Heart right ventricle (tissue), 16 donors: ENCODE measurements at regions of chr9 and their contacts with region 1.

Region 1: GRCh38 chr9:108939975-108940374 is 5.8 kb downstream of the ABITRAM start:
- DNase-seq: no peak
- ATAC-seq: no peak
- H3K4me3 ChIP-seq: no peak overlapping the region
- H3K27ac ChIP-seq: no peak overlapping the region
- H3K4me1 ChIP-seq: peaks cover 2 to 12% (median 11%) of the 10 kb centered on the region in 9 donors
- H3K27me3 ChIP-seq: no peaks in the 10 kb centered on the region
- CTCF ChIP-seq: no peak

Region 2: DNA sequence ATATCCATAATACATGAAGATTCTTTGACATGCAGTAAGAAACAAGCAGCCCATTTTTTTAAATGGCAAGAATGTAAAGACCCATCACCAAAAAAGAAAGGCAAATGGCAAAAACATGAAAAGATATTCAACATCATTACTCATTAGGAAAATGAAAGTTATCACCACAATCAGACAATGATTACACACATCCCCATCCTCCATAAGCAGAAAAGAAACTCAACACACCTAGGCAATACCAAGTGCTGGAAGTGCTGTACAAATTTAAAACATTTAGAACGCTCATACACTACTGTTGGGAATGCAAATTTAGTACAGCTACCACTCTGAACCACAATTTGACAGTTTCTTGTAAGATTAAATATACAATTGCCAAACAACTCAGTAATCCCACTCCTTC is 550.9 kb before region 1 on chr9:
- intact Hi-C with region 1: no loop called
- DNase-seq: no peak
- ATAC-seq: no peak
- H3K4me3 ChIP-seq: no peak overlapping the region
- H3K27ac ChIP-seq: no peak overlapping the region
- H3K4me1 ChIP-seq: no peaks in the 10 kb centered on the region
- H3K27me3 ChIP-seq: no peaks in the 10 kb centered on the region
- CTCF ChIP-seq: no peak

Region 3: DNA sequence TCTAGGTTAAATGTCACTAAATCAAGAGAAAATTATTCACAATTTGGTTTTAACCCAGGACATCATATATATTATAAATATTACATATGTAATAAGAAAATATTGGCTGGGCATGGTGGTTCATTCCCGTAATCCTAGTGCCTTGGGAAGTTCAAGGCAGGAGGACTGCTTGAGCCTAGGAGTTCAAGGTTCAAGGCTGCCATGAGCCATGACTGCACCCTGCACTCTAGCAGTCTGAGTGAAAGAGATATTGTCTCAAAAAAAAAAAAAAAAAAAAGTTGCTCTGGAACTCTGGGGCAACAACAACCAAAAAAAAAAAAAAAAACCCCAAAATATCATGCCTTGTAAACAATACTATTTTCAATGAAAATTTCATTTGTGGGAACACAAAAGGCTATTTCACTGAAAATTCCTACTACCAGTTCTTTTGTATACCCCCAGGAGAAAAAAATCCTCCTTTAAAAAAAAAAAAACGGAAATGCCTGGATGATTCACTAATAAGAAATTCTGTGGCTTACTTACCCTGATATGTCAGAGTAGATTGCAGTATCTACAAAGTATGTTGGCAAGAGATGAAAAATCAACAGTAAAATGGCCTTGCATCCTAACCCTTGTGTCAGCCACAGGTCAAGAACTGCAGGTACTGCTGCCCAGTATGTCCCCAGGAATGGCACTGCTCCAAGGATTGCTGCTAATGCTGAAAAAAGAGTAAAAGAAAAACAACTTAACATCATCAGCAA is 95.9 kb after region 1 on chr9:
- intact Hi-C with region 1: loop called in 1 of 10 experiments (anchors 10 kb)
- DNase-seq: peak in 1 of 2 donors; percentile 30
- ATAC-seq: peak; percentile 33 to 81 (median 67)
- H3K4me3 ChIP-seq: no peak overlapping the region
- H3K27ac ChIP-seq: peak overlapping the region in 9 of 10 donors; percentile 22 to 72 (median 55)
- H3K4me1 ChIP-seq: peaks cover 0 to 26% (median 17%) of the 10 kb centered on the region in 9 donors
- H3K27me3 ChIP-seq: no peaks in the 10 kb centered on the region
- CTCF ChIP-seq: no peak